Calu3 (cell line): ENCODE measurements at regions of chr2 and their contacts with region 1.

Region 1: DNA sequence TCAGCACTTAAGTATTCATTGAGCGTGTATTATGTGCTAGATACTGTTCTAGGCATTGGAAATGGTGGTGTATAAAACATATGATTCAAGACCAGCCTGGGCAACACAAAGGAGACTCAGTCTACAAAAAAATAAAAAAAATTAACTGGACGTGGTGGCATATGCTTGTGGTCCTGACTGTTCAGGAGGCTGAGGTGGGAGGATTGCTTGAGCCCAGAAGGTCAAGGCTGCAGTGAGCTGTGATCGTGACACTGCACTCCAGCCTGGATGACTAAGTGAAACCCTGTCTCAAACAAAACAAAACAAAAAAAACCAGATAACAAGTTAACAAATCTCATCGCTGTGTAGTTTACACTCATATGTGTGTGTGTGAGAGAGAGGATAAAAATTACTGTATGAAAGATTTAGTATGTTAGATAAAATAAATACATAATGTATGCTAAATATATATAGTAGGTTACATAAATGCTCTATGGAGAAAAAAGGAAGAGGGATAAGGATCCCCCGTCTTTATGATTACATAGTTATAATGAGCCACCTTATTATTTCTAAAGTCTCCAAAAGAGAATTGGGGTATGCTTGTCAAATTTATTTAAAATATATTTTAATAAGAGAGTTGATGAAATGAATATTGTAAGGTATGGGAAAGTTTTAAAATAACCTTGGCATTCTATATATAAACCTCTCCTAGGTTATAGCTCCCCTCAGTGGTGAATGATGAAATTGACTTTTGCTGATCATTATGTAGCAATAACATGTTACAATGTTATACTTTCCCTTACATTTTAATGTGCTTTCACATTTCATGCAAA is 69.2 kb downstream of the EHBP1 start:
- DNase-seq: peak; percentile 45
- H3K4me3 Mint-ChIP-seq: no peak overlapping the region
- H3K27ac Mint-ChIP-seq: peak overlapping the region; percentile 65
- H3K4me1 Mint-ChIP-seq: peaks cover 20% of the 10 kb centered on the region
- H3K27me3 Mint-ChIP-seq: no peaks in the 10 kb centered on the region
- CTCF ChIP-seq: peak; percentile 58

Region 2: DNA sequence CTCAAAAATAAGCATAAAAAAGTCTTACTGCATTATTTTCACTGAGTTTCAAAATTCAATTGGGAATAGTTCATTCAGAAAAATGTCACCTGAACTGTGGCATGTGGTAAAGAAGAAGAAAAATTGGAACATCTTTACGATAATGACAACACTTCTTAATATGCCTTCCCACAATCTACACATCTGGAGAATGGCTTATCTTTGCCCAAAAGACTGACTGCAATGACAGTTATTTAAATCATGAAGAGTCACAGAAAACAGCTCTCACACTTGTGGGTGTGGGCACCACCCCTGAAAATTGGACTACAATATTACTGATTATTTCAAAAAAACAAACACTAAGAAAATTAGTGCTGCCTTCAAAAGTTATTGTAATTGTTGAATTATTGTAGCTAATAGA is 1456.2 kb before region 1 on chr2:
- CTCF ChIA-PET with region 1: no interaction called
- intact Hi-C with region 1: no loop called
- DNase-seq: no peak
- H3K4me3 Mint-ChIP-seq: no peak overlapping the region
- H3K27ac Mint-ChIP-seq: no peak overlapping the region
- H3K4me1 Mint-ChIP-seq: no peaks in the 10 kb centered on the region
- H3K27me3 Mint-ChIP-seq: no peaks in the 10 kb centered on the region
- CTCF ChIP-seq: no peak

Region 3: GRCh38 chr2:61910603-61911002 is 864.2 kb before region 1 on chr2:
- CTCF ChIA-PET with region 1: no interaction called
- intact Hi-C with region 1: loop called (anchors 10 kb)
- DNase-seq: peak; percentile 24
- H3K4me3 Mint-ChIP-seq: no peak overlapping the region
- H3K27ac Mint-ChIP-seq: no peak overlapping the region
- H3K4me1 Mint-ChIP-seq: no peaks in the 10 kb centered on the region
- H3K27me3 Mint-ChIP-seq: no peaks in the 10 kb centered on the region
- CTCF ChIP-seq: no peak

Region 4: DNA sequence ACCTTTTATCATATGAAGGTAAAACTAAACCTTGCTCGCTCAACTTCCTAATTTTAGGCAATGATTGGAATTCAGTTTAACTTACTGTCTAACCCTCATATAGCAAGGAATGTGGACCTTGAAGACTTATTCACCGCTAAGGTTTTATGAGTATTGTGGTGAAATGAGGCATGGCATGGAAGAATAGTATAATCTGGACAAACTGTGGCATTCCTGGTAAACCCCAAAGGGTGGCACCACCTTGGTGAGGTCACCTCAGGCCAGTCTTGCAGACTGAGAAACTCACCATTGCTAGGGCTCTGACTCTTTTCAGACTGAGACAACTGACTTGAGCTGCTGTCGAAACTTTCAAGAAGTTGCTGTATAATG is 120.4 kb before region 1 on chr2:
- CTCF ChIA-PET with region 1: no interaction called
- intact Hi-C with region 1: loop called (anchors 5 kb)
- DNase-seq: peak; percentile 44
- H3K4me3 Mint-ChIP-seq: peak overlapping the region; percentile 38
- H3K27ac Mint-ChIP-seq: peak overlapping the region; percentile 53
- H3K4me1 Mint-ChIP-seq: peaks cover 21% of the 10 kb centered on the region
- H3K27me3 Mint-ChIP-seq: no peaks in the 10 kb centered on the region
- CTCF ChIP-seq: no peak

Region 5: GRCh38 chr2:62719757-62720156 is 55.0 kb before region 1 on chr2:
- CTCF ChIA-PET with region 1: no interaction called
- intact Hi-C with region 1: no loop called
- DNase-seq: no peak
- H3K4me3 Mint-ChIP-seq: no peak overlapping the region
- H3K27ac Mint-ChIP-seq: no peak overlapping the region
- H3K4me1 Mint-ChIP-seq: peaks cover 21% of the 10 kb centered on the region
- H3K27me3 Mint-ChIP-seq: no peaks in the 10 kb centered on the region
- CTCF ChIP-seq: no peak